PC-9 (cell line): ENCODE measurements at regions of chr5 and their contacts with region 1.

Region 1: GRCh38 chr5:56123531-56124243 is 109.4 kb downstream of the ANKRD55 start:
- DNase-seq: peak; percentile 88 to 96
- H3K4me3 ChIP-seq: no peak overlapping the region
- H3K27ac ChIP-seq: peak overlapping the region; percentile 84
- H3K4me1 ChIP-seq: peaks cover 34% of the 10 kb centered on the region
- H3K27me3 ChIP-seq: no peaks in the 10 kb centered on the region
- CTCF ChIP-seq: no peak

Region 2: GRCh38 chr5:56105511-56106291 is 18.0 kb before region 1 on chr5:
- CTCF ChIA-PET with region 1: no interaction called
- POLR2A ChIA-PET with region 1: interaction called, 27 read pairs
- intact Hi-C with region 1: no loop called
- DNase-seq: no peak
- H3K4me3 ChIP-seq: no peak overlapping the region
- H3K27ac ChIP-seq: no peak overlapping the region
- H3K4me1 ChIP-seq: peaks cover 13% of the 10 kb centered on the region
- H3K27me3 ChIP-seq: no peaks in the 10 kb centered on the region
- CTCF ChIP-seq: no peak

Region 3: DNA sequence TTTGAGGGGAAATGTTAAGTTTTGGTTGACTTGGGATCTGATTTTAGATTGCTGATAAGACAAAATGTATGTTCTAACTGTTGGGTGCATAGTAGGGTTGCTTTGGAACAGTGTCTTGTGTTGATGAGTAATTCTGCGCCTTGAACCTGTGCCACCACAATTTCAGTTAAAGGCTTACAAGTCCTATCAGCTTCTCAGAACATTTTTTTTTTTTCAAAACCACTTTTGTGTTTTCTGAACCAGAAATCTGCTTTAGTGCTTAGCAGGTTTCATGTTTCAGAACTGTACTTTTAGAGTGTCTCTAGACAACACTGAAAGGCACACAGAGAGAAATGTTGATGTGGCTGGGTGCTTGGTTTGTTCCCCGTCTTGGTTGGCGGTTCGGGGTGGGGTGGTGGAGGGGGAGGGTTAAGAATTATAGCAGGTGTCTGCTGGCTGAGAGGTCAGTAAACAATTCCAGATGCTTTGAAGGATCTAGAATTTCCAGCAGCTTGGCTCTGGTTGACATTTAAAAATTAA is 24.8 kb after region 1 on chr5:
- CTCF ChIA-PET with region 1: no interaction called
- POLR2A ChIA-PET with region 1: interaction called, 10 read pairs
- intact Hi-C with region 1: loop called (anchors 2 kb)
- DNase-seq: no peak
- H3K4me3 ChIP-seq: no peak overlapping the region
- H3K27ac ChIP-seq: no peak overlapping the region
- H3K4me1 ChIP-seq: peaks cover 27% of the 10 kb centered on the region
- H3K27me3 ChIP-seq: no peaks in the 10 kb centered on the region
- CTCF ChIP-seq: no peak